ENCODE measurements at regions of chr12 and their contacts with region 1.

Region 1: GRCh38 chr12:116502952-116503542 is 56.1 kb upstream of the MAP1LC3B2 start:
- DNase-seq: peak; percentile 92 to 96
- H3K4me3 ChIP-seq: no peak overlapping the region
- H3K4me3 Mint-ChIP-seq: peak overlapping the region; percentile 49
- H3K27ac Mint-ChIP-seq: peak overlapping the region; percentile 91
- H3K4me1 ChIP-seq: peaks cover 35% of the 10 kb centered on the region
- H3K4me1 Mint-ChIP-seq: peaks cover 31% of the 10 kb centered on the region
- H3K27me3 ChIP-seq: no peaks in the 10 kb centered on the region
- H3K27me3 Mint-ChIP-seq: no peaks in the 10 kb centered on the region
- CTCF ChIP-seq: no peak

Region 2: GRCh38 chr12:116368196-116369194 is 134.6 kb before region 1 on chr12:
- CTCF ChIA-PET with region 1: no interaction called
- POLR2A ChIA-PET with region 1: no interaction called
- intact Hi-C with region 1: loop called (anchors 1 kb)
- DNase-seq: peak; percentile 92 to 96
- H3K4me3 ChIP-seq: no peak overlapping the region
- H3K4me3 Mint-ChIP-seq: peak overlapping the region; percentile 56
- H3K27ac Mint-ChIP-seq: peak overlapping the region; percentile 90
- H3K4me1 ChIP-seq: peaks cover 65% of the 10 kb centered on the region
- H3K4me1 Mint-ChIP-seq: peaks cover 32% of the 10 kb centered on the region
- H3K27me3 ChIP-seq: no peaks in the 10 kb centered on the region
- H3K27me3 Mint-ChIP-seq: no peaks in the 10 kb centered on the region
- CTCF ChIP-seq: no peak

Region 3: DNA sequence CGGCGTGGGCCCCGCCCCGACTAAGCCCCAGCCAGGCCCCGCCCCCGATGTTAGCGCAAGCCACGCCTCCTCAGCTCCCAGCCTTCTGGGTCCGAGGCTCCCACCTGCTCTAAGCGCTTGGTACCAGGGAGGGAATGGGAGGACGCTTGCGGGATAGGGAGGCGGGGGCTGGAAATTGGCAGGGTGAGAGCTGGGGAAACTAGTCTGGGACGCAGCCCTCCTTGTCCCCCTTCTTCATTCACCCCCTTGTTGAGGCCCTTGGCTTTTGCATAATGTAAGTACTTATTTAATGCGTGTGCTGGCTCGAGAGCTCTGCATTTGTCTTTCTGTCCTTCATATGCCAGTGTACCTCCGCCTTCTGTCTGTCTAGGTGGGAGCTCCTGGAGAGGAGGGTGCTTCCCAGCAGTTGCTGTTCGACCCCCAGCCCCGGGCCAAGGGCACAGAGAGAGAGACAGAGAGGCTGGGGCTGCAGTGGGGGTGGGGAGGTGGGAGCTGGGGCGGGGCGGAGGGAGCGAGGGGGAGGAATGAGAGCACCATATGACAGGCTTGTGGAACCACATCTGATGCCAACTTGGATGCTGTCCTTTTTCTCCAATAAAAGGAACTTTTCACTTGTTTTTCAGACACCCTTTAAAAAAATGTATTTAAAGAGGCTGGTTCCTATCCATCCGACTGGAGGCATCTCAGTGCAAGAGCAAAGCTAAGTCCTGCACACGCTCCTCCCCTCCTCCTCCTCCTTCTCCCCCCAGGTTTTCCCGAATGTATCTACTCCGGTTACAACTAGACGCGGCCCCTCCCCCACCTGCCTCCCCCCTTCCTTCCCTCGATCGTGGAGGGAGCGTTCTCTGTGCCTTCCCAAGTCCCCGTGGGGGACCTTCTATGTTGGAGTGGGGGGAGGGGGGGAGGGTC is 30.6 kb after region 1 on chr12:
- CTCF ChIA-PET with region 1: interaction called, 3 read pairs
- POLR2A ChIA-PET with region 1: interaction called, 6 read pairs
- intact Hi-C with region 1: loop called (anchors 1 kb)
- DNase-seq: peak; percentile 81 to 87
- H3K4me3 ChIP-seq: peak overlapping the region; percentile 65
- H3K4me3 Mint-ChIP-seq: peak overlapping the region; percentile 78
- H3K27ac Mint-ChIP-seq: no peak overlapping the region
- H3K4me1 ChIP-seq: peaks cover 24% of the 10 kb centered on the region
- H3K4me1 Mint-ChIP-seq: peaks cover 18% of the 10 kb centered on the region
- H3K27me3 ChIP-seq: no peaks in the 10 kb centered on the region
- H3K27me3 Mint-ChIP-seq: no peaks in the 10 kb centered on the region
- CTCF ChIP-seq: no peak

Region 4: GRCh38 chr12:116599285-116600136 is 96.5 kb after region 1 on chr12:
- CTCF ChIA-PET with region 1: no interaction called
- POLR2A ChIA-PET with region 1: no interaction called
- intact Hi-C with region 1: loop called (anchors 1 kb)
- DNase-seq: peak in 1 of 2 experiments; percentile 34
- H3K4me3 ChIP-seq: no peak overlapping the region
- H3K4me3 Mint-ChIP-seq: peak overlapping the region; percentile 8
- H3K27ac Mint-ChIP-seq: peak overlapping the region; percentile 22
- H3K4me1 ChIP-seq: peaks cover 22% of the 10 kb centered on the region
- H3K4me1 Mint-ChIP-seq: peaks cover 37% of the 10 kb centered on the region
- H3K27me3 ChIP-seq: no peaks in the 10 kb centered on the region
- H3K27me3 Mint-ChIP-seq: no peaks in the 10 kb centered on the region
- CTCF ChIP-seq: peak in 1 of 2 experiments; percentile 13

Region 5: DNA sequence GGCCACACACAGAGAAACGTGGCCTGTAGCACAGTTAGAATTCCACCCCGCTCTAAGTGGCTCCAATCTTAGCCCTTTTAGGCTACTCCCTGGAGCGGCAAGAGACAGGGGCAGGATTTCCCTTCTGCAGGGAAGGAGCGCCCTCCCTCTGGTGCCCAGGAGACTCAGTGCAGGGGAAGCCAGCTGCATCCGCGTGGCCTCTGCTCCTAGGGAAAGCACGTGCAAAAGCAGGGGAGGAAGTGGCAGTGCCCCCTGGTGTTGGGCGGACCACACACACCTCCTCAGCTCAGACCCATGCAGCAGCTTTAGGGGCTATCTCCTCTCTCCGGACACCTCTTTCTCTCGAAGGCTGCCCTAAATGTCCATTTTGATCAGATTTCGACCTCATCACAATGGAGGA is 184.8 kb after region 1 on chr12:
- CTCF ChIA-PET with region 1: interaction called, 5 read pairs
- POLR2A ChIA-PET with region 1: no interaction called
- intact Hi-C with region 1: loop called (anchors 5 kb)
- DNase-seq: peak; percentile 77 to 79
- H3K4me3 ChIP-seq: no peak overlapping the region
- H3K4me3 Mint-ChIP-seq: no peak overlapping the region
- H3K27ac Mint-ChIP-seq: no peak overlapping the region
- H3K4me1 ChIP-seq: no peaks in the 10 kb centered on the region
- H3K4me1 Mint-ChIP-seq: peaks cover 14% of the 10 kb centered on the region
- H3K27me3 ChIP-seq: no peaks in the 10 kb centered on the region; the same call in 1 of the 2 replicates
- H3K27me3 Mint-ChIP-seq: no peaks in the 10 kb centered on the region
- CTCF ChIP-seq: peak; percentile 59 to 83

Measured in Caco-2 (cell line).